ENCODE measurements at regions of chr11 and their contacts with region 1.

Region 1: GRCh38 chr11:5624489-5625279 is at the start of gene TRIM34:
- DNase-seq: peak; percentile 62
- ATAC-seq: peak; percentile 78
- H3K4me3 ChIP-seq: peak within 1 kb of the TSS; percentile 46
- H3K27ac ChIP-seq: peak within 1 kb of the TSS; percentile 46
- H3K4me1 ChIP-seq: peaks cover 21% of the 10 kb centered on the region
- H3K27me3 ChIP-seq: no peaks in the 10 kb centered on the region
- CTCF ChIP-seq: no peak
- POLR2A ChIP-seq: no peak
- RAD21 ChIP-seq: no peak
- total RNA-seq, gene TRIM34: 8.6 and 12.5 TPM in 2 replicates

Region 2: GRCh38 chr11:5605849-5606248 is 18.8 kb before region 1 on chr11:
- CTCF ChIA-PET with region 1: interaction called, 4 read pairs
- POLR2A ChIA-PET with region 1: interaction called, 3 read pairs
- dilution Hi-C with region 1: no loop called
- in situ Hi-C with region 1: no loop called
- intact Hi-C with region 1: loop called (anchors 1 kb)
- DNase-seq: peak; percentile 92
- ATAC-seq: peak; percentile 71
- H3K4me3 ChIP-seq: no peak overlapping the region
- H3K27ac ChIP-seq: no peak overlapping the region
- H3K4me1 ChIP-seq: peaks cover 8% of the 10 kb centered on the region
- H3K27me3 ChIP-seq: no peaks in the 10 kb centered on the region
- CTCF ChIP-seq: 0 out of 2 replicates have a peak, but pooled peaks have one; percentile 5
- POLR2A ChIP-seq: no peak
- RAD21 ChIP-seq: peak; percentile 32

Region 3: GRCh38 chr11:5684646-5685362 is 60.1 kb after region 1 on chr11 and contains the start of gene TRIM5:
- CTCF ChIA-PET with region 1: no interaction called
- POLR2A ChIA-PET with region 1: interaction called, 4 read pairs
- dilution Hi-C with region 1: no loop called
- in situ Hi-C with region 1: loop called (anchors 5 kb)
- intact Hi-C with region 1: loop called (anchors 1 kb)
- DNase-seq: peak; percentile 99
- ATAC-seq: peak; percentile 95
- H3K4me3 ChIP-seq: peak within 1 kb of the TSS; percentile 56
- H3K27ac ChIP-seq: peak within 1 kb of the TSS; percentile 67
- H3K4me1 ChIP-seq: no peaks in the 10 kb centered on the region
- H3K27me3 ChIP-seq: no peaks in the 10 kb centered on the region
- CTCF ChIP-seq: peak; percentile 58
- POLR2A ChIP-seq: peak; percentile 95
- RAD21 ChIP-seq: peak; percentile 46
- total RNA-seq, gene TRIM5: 49.1 and 58.0 TPM in 2 replicates

Measured in IMR-90 (cell line).